ENCODE measurements at regions of chr17 and their contacts with region 1.

Region 1: GRCh38 chr17:5592382-5592781 is 8.1 kb upstream of the NLRP1 start:
- DNase-seq: peak; percentile 59
- H3K4me3 Mint-ChIP-seq: no peak overlapping the region
- H3K27ac Mint-ChIP-seq: no peak overlapping the region
- H3K4me1 Mint-ChIP-seq: peaks cover 2% of the 10 kb centered on the region
- H3K27me3 Mint-ChIP-seq: peaks cover 52% of the 10 kb centered on the region
- CTCF ChIP-seq: peak; percentile 46

Region 2: GRCh38 chr17:5706577-5707216 is 114.3 kb after region 1 on chr17:
- CTCF ChIA-PET with region 1: interaction called, 5 read pairs
- POLR2A ChIA-PET with region 1: no interaction called
- intact Hi-C with region 1: loop called (anchors 2 kb)
- DNase-seq: peak; percentile 62
- H3K4me3 Mint-ChIP-seq: no peak overlapping the region
- H3K27ac Mint-ChIP-seq: no peak overlapping the region
- H3K4me1 Mint-ChIP-seq: no peaks in the 10 kb centered on the region
- H3K27me3 Mint-ChIP-seq: peaks cover 42% of the 10 kb centered on the region
- CTCF ChIP-seq: peak; percentile 50

Region 3: GRCh38 chr17:5821803-5822202 is 229.4 kb after region 1 on chr17:
- CTCF ChIA-PET with region 1: interaction called, 11 read pairs
- POLR2A ChIA-PET with region 1: no interaction called
- intact Hi-C with region 1: no loop called
- DNase-seq: no peak
- H3K4me3 Mint-ChIP-seq: no peak overlapping the region
- H3K27ac Mint-ChIP-seq: peak overlapping the region; percentile 26
- H3K4me1 Mint-ChIP-seq: peaks cover 17% of the 10 kb centered on the region
- H3K27me3 Mint-ChIP-seq: no peaks in the 10 kb centered on the region
- CTCF ChIP-seq: no peak

Region 4: DNA sequence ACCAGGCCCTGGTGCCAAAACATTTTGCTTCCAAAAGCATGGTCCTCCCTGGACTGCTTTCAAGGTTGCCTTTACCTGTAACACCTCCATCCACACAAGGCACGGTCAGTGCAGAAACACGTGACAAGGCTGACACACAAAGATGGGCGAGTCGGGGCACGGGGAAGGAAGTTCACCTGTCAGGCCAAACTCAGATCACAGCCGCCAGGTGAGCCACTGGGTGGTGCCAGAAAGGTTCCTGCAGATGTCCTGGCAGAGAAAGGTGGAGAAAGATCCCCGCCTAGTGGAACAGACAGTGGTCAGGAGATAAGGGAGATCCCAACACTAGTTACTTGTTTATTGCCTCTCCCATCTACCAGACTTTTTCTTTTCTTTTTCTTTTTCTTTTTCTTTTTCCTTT is 687.3 kb after region 1 on chr17:
- CTCF ChIA-PET with region 1: interaction called, 11 read pairs
- POLR2A ChIA-PET with region 1: interaction called, 3 read pairs
- intact Hi-C with region 1: loop called (anchors 1 kb)
- DNase-seq: peak; percentile 79
- H3K4me3 Mint-ChIP-seq: no peak overlapping the region
- H3K27ac Mint-ChIP-seq: no peak overlapping the region
- H3K4me1 Mint-ChIP-seq: no peaks in the 10 kb centered on the region
- H3K27me3 Mint-ChIP-seq: peaks cover 61% of the 10 kb centered on the region
- CTCF ChIP-seq: peak; percentile 67

Region 5: GRCh38 chr17:6421700-6422604 is 829.6 kb after region 1 on chr17:
- CTCF ChIA-PET with region 1: interaction called, 32 read pairs
- POLR2A ChIA-PET with region 1: interaction called, 4 read pairs
- intact Hi-C with region 1: loop called (anchors 1 kb)
- DNase-seq: peak; percentile 83
- H3K4me3 Mint-ChIP-seq: no peak overlapping the region
- H3K27ac Mint-ChIP-seq: no peak overlapping the region
- H3K4me1 Mint-ChIP-seq: no peaks in the 10 kb centered on the region
- H3K27me3 Mint-ChIP-seq: no peaks in the 10 kb centered on the region
- CTCF ChIP-seq: peak; percentile 95